MCF 10A (cell line): ENCODE measurements at regions of chr1 and their contacts with region 1.

Region 1: DNA sequence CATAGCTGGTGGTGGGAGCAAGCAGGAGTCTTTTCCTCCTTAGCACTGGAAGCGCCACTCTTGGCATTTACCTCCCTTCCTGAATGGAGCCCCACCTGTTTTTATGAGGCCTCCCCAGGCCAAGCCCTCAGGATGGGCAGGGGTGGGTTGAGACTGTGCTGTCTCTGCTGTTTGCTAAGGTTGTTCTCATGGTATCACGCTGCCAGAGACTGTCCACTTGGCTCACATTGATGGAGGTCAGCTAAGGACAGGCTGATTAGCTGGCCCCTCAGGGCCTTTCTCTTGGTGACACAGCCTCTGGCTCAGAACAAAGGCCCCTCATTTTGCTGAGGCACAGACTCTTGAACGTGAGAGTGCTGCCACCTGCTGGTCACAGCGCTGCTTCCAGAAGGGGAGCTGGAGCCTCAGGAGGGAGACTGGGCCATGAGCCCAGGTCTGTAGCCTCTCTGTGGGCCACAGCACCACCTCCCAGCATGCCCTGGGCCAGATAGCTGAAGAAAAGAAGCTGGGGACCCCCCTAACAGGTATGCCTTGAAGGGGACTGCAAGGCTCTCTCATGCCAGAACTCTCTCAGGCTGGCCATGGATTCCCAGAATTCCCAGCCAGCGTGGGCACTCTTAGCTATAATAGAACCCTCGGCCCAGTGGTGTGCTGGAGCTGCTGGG is 85.6 kb downstream of the CD58 start:
- DNase-seq: peak; percentile 82
- H3K4me3 Mint-ChIP-seq: no peak overlapping the region
- H3K27ac Mint-ChIP-seq: no peak overlapping the region
- H3K4me1 Mint-ChIP-seq: peaks cover 28% of the 10 kb centered on the region
- H3K27me3 Mint-ChIP-seq: no peaks in the 10 kb centered on the region
- CTCF ChIP-seq: peak; percentile 90

Region 2: DNA sequence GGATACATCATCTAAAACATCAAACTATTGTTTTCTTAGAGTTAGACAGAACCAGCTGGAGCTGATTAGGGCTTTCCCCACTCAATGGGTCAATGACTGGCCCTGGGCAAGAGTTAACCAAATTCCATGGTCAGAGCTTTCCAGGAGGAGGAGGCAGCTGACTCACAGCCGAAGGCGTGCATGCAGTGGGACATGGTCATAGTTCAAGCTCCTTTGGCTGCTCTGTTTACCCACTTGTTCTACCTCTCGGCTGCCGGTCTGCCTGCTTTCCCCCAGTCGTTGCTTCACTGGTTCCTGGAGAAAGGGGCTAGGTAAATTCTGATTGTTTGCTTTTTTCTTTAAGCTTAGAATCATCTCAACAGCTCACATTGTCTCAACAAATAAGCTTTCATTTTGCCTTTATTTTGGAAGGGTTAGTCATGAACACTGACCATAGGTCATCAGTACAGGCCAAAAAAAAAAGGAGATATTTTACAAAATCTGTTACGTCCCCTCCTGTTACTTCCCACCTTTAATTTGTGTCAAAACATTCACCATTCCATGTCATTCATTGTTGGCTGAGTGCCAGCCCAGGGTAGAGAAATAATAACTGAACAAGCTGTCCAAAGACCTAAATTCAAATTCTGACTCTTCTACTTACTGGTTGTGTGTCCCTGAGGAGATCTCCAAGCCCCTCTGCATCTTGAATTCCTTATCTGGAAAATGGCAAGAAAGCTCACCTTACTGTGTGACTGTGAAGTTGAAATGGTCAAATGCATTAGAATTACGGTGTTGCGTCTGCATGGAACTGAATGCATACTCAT is 362.0 kb before region 1 on chr1:
- CTCF ChIA-PET with region 1: interaction called, 19 read pairs
- POLR2A ChIA-PET with region 1: no interaction called
- intact Hi-C with region 1: no loop called
- DNase-seq: peak; percentile 75
- H3K4me3 Mint-ChIP-seq: no peak overlapping the region
- H3K27ac Mint-ChIP-seq: no peak overlapping the region
- H3K4me1 Mint-ChIP-seq: peaks cover 8% of the 10 kb centered on the region
- H3K27me3 Mint-ChIP-seq: no peaks in the 10 kb centered on the region
- CTCF ChIP-seq: no peak

Region 3: DNA sequence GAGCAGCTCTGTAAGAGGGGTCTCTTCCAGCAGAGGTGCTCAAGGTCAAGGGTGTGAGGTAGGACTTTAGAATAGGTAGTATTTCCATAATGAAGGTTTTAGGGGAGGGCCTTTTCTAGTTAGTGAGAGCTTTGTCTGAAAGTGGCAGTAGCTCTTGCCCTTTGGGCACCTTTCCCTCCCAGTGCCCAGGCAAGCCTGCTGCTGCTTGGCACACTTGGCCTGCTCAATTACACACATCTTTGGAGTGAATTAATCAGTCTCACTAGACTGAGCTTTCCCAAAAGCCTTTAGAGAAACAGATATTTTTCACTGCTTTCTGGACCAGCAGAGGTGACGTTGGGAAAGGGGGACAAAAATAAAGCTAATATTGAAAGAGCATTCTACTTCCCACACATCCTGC is 326.0 kb before region 1 on chr1:
- CTCF ChIA-PET with region 1: interaction called, 191 read pairs
- POLR2A ChIA-PET with region 1: interaction called, 3 read pairs
- intact Hi-C with region 1: no loop called
- DNase-seq: no peak
- H3K4me3 Mint-ChIP-seq: no peak overlapping the region
- H3K27ac Mint-ChIP-seq: no peak overlapping the region
- H3K4me1 Mint-ChIP-seq: no peaks in the 10 kb centered on the region
- H3K27me3 Mint-ChIP-seq: peaks cover 12% of the 10 kb centered on the region
- CTCF ChIP-seq: no peak

Region 4: DNA sequence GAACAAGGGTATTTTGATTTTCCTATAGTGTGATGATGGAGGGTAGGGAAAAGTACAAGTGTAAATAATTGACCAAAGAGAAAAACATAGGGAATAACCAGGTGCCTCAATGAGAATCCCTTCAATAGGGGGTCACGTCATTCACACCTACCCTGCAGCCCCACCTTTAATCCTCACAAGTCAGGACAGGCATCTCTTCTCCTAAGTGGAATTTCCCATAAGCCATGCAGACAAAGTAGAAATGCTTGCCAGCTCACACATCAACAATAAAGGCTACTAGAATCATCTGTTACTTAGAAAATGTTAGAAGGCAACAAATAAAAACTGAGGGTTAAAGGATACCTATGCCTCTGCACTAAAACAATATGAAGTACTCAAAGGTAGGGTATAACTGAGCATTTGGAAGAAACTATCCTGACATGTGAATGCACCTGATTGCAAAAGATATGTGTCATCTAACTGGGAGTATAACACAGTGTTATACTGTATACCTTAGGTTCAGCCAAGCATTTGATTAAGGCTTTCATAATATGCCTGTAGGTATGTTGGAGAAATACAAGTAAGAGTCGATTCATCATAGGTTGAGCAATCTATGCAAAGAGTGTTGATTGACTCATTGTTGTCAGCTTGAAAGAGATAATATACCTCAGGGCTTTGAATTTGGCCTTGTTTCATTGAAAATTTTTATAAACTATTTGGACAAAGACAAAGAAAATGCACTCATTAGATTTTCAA is 144.5 kb before region 1 on chr1:
- CTCF ChIA-PET with region 1: interaction called, 11 read pairs
- POLR2A ChIA-PET with region 1: no interaction called
- intact Hi-C with region 1: no loop called
- DNase-seq: peak; percentile 92
- H3K4me3 Mint-ChIP-seq: peak overlapping the region; percentile 16
- H3K27ac Mint-ChIP-seq: peak overlapping the region; percentile 63
- H3K4me1 Mint-ChIP-seq: peaks cover 19% of the 10 kb centered on the region
- H3K27me3 Mint-ChIP-seq: no peaks in the 10 kb centered on the region
- CTCF ChIP-seq: no peak

Region 5: GRCh38 chr1:116405241-116406135 is 79.7 kb before region 1 on chr1:
- CTCF ChIA-PET with region 1: interaction called, 18 read pairs
- POLR2A ChIA-PET with region 1: interaction called, 4 read pairs
- intact Hi-C with region 1: no loop called
- DNase-seq: no peak
- H3K4me3 Mint-ChIP-seq: no peak overlapping the region
- H3K27ac Mint-ChIP-seq: no peak overlapping the region
- H3K4me1 Mint-ChIP-seq: peaks cover 24% of the 10 kb centered on the region
- H3K27me3 Mint-ChIP-seq: no peaks in the 10 kb centered on the region
- CTCF ChIP-seq: no peak

Region 6: DNA sequence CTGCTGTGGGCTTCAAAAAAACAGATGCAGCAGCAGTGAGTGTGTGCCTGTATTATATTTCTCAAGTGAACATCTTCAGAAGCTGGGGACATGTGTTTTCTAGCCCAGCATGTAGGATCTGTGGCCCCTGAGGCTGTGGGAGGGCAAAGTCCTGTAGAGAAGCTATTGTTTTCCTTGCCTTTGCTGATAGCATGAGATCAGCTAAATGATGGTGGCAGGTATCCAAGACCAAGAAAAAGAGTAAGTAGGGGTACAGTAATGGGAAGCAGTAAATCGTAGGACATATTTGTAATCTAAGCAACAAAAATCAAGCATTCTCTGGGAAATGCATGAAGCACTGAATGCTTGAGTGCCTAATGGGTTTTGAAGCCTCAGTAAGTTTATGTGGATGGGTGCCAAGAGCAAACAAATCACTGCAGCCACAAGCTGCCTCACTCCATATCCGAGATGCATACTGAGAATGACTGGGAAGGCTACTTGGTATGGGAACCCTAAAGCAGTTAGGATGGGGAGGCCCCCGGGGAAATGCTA is 12.7 kb before region 1 on chr1:
- CTCF ChIA-PET with region 1: interaction called, 26 read pairs
- POLR2A ChIA-PET with region 1: no interaction called
- intact Hi-C with region 1: no loop called
- DNase-seq: no peak
- H3K4me3 Mint-ChIP-seq: no peak overlapping the region
- H3K27ac Mint-ChIP-seq: no peak overlapping the region
- H3K4me1 Mint-ChIP-seq: no peaks in the 10 kb centered on the region
- H3K27me3 Mint-ChIP-seq: no peaks in the 10 kb centered on the region
- CTCF ChIP-seq: no peak

Region 7: GRCh38 chr1:116654355-116654754 is 169.2 kb after region 1 on chr1:
- CTCF ChIA-PET with region 1: no interaction called
- POLR2A ChIA-PET with region 1: no interaction called
- intact Hi-C with region 1: no loop called
- DNase-seq: no peak
- H3K4me3 Mint-ChIP-seq: no peak overlapping the region
- H3K27ac Mint-ChIP-seq: no peak overlapping the region
- H3K4me1 Mint-ChIP-seq: no peaks in the 10 kb centered on the region
- H3K27me3 Mint-ChIP-seq: no peaks in the 10 kb centered on the region
- CTCF ChIP-seq: no peak